ENCODE measurements at regions of chr6 and their contacts with region 1.

Region 1: DNA sequence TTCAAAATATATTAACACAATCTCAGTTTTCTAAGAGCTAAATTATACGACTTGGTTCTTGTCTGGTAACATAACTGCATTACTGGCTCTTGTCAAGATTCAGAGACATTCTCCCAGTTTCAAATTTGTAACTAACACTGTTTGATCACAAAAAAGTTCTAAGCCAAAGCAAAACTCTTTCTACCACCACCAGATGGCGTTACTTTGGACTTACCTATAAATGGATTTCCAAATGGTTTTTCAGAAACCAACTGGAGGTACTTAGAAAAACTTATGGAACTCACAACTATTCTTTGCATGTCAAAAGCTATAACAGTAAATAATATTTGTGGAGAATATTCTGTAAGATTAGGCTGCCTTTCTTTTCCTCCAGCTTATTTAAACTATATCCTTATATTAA is 34.2 kb upstream of the GFRAL start:
- DNase-seq: peak; percentile 34
- H3K4me3 ChIP-seq: no peak overlapping the region
- H3K27ac ChIP-seq: no peak overlapping the region
- H3K4me1 ChIP-seq: no peaks in the 10 kb centered on the region
- H3K27me3 ChIP-seq: no peaks in the 10 kb centered on the region
- CTCF ChIP-seq: peak; percentile 61

Region 2: DNA sequence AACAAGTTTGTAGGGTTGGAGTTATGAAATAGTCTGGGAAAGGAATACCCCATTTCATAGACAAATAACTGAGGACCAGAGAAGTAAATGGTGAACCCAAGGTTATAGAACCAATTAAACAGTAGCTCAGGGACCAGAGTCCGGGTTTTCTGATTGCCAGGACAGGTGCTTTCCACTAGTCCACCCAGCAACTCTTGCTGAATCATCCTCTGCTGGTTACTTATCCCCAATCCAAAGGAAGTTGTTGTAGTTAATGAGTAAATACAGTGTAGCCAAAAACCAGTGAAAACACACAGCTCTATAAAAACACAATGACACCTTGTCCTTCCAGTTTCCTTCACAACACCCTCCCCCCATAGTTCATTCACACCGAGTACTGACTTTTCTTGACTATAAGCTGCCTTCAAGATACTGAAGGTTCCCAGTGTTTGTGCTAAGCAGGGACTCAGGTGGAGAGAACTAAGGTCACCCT is 985.6 kb before region 1 on chr6:
- CTCF ChIA-PET with region 1: no interaction called
- POLR2A ChIA-PET with region 1: no interaction called
- intact Hi-C with region 1: no loop called
- DNase-seq: no peak
- H3K4me3 ChIP-seq: no peak overlapping the region
- H3K27ac ChIP-seq: no peak overlapping the region
- H3K4me1 ChIP-seq: no peaks in the 10 kb centered on the region
- H3K27me3 ChIP-seq: no peaks in the 10 kb centered on the region
- CTCF ChIP-seq: no peak

Region 3: GRCh38 chr6:55117267-55117666 is 175.8 kb before region 1 on chr6:
- CTCF ChIA-PET with region 1: no interaction called
- POLR2A ChIA-PET with region 1: no interaction called
- intact Hi-C with region 1: no loop called
- DNase-seq: no peak
- H3K4me3 ChIP-seq: no peak overlapping the region
- H3K27ac ChIP-seq: no peak overlapping the region
- H3K4me1 ChIP-seq: no peaks in the 10 kb centered on the region
- H3K27me3 ChIP-seq: no peaks in the 10 kb centered on the region
- CTCF ChIP-seq: no peak

Region 4: GRCh38 chr6:55941702-55942101 is 648.6 kb after region 1 on chr6:
- CTCF ChIA-PET with region 1: no interaction called
- POLR2A ChIA-PET with region 1: no interaction called
- intact Hi-C with region 1: loop called (anchors 5 kb)
- DNase-seq: peak; percentile 40
- H3K4me3 ChIP-seq: no peak overlapping the region
- H3K27ac ChIP-seq: no peak overlapping the region
- H3K4me1 ChIP-seq: no peaks in the 10 kb centered on the region
- H3K27me3 ChIP-seq: no peaks in the 10 kb centered on the region
- CTCF ChIP-seq: peak; percentile 51; the same call in 1 of the 2 replicates

Measured in A673 (cell line).